Right ventricle myocardium inferior (tissue), 1 donor: ENCODE measurements at regions of chr1 and their contacts with region 1.

Region 1: DNA sequence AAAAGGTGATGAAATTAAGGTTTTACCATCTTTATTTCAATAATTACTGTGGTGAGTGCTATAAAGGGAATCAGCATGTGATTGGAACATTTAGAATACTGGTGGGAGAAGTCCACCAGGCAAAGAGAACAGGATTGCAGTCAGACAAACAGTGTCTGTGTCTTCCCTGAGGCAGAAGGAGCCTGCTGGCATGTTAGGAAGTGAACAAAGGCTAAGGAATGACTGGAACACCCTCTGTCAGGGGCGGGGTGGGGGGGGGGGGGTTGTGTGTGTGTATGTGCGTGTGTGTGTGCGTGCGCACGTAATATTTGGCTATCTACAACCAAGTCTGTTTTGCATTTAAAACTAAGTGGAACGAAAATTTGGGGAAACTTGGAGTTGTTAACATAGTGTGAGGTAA is 30.2 kb downstream of the SRRM1 start:
- DNase-seq: no peak
- ATAC-seq: no peak

Region 2: GRCh38 chr1:24558902-24559791 is 114.2 kb before region 1 on chr1:
- intact Hi-C with region 1: no loop called
- DNase-seq: no peak
- ATAC-seq: peak; percentile 67

Region 3: GRCh38 chr1:25223471-25223870 is 550.1 kb after region 1 on chr1:
- intact Hi-C with region 1: loop called (anchors 10 kb)
- DNase-seq: no peak
- ATAC-seq: no peak